ENCODE measurements at regions of chr3 and their contacts with region 1.

Region 1: DNA sequence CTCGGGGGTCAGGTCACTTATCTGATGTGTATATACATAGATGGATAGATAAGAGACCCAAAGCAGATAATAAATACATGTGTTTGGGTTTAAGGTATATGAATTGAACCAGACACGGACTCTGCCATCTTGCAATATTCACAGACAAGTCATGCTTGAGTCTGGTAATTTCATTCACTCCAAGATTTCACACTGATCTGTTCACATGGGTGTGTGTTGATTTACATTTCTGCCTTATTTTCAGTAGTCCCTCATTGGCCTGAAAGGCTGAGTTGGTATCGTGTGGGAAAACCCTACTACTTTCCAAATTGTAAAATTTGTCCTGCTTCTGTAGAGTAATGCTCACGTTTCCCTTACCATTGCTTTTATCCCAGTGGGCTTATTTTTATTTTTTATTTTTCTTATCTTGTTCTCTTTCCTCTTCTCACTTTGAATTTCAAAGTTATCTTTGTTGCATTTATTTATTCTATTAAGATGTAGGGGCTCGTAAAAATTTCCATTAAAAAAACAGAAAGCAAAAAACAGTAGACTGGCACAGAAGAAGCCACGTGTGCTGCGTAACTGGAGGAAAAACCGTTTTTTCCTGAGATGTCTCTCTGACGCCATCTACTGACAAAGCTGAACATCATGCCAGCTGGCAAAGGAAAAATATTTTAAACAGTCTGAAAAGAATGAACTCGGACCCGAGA is 10.8 kb upstream of the MFSD1 start:
- DNase-seq: peak in 1 of 3 donors; percentile 32
- ATAC-seq: peak; percentile 77
- H3K4me3 ChIP-seq: no peak overlapping the region
- H3K4me1 ChIP-seq: peaks cover 6% of the 10 kb centered on the region
- CTCF ChIP-seq: peak; percentile 75

Region 2: GRCh38 chr3:158539414-158540014 is 251.5 kb before region 1 on chr3:
- intact Hi-C with region 1: loop called in 1 of 2 experiments (anchors 10 kb)
- DNase-seq: peak in 1 of 3 donors; percentile 83
- ATAC-seq: peak; percentile 53
- H3K4me3 ChIP-seq: no peak overlapping the region
- H3K4me1 ChIP-seq: no peaks in the 10 kb centered on the region
- CTCF ChIP-seq: no peak

Region 3: DNA sequence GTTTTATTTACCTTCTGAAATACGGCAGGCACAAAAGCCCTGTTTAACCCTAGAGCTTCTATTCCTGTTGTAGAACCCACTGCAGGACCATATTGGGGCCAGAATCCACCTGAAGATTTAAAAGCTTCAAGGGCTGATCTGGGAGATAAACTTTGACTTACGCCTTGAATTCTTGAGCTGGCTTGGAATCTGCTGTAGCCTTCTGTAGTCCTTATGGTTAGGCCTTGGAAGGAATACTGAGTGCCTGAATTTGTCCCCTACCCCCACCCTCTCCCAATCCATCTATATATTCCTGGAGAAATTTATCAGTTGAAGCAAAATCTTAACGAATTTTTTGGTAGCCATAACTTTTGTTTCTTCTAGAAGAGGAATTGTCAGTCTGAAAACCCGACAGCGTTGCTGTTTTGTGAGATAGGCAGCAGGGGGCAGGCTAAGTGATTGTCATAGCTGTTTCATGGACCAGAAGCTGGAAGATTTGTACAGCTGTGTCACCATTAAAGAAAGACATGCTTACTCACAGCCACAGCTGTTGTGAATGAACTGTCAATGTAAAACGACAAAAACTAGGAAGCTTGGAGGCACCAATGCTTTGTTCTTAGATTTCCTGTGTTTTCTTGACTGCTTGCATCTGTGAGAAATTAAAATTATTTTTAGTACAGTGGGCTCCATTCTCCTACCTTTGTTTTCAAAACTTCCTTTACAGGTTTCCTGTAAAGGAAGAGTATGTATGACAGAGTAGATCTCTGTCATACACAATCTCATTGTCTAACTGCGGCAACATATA is 131.4 kb before region 1 on chr3:
- intact Hi-C with region 1: loop called (anchors 5 to 10 kb)
- DNase-seq: peak in 2 of 3 donors; percentile 53 to 79
- ATAC-seq: peak; percentile 94
- H3K4me3 ChIP-seq: no peak overlapping the region
- H3K4me1 ChIP-seq: no peaks in the 10 kb centered on the region
- CTCF ChIP-seq: peak; percentile 51

Region 4: DNA sequence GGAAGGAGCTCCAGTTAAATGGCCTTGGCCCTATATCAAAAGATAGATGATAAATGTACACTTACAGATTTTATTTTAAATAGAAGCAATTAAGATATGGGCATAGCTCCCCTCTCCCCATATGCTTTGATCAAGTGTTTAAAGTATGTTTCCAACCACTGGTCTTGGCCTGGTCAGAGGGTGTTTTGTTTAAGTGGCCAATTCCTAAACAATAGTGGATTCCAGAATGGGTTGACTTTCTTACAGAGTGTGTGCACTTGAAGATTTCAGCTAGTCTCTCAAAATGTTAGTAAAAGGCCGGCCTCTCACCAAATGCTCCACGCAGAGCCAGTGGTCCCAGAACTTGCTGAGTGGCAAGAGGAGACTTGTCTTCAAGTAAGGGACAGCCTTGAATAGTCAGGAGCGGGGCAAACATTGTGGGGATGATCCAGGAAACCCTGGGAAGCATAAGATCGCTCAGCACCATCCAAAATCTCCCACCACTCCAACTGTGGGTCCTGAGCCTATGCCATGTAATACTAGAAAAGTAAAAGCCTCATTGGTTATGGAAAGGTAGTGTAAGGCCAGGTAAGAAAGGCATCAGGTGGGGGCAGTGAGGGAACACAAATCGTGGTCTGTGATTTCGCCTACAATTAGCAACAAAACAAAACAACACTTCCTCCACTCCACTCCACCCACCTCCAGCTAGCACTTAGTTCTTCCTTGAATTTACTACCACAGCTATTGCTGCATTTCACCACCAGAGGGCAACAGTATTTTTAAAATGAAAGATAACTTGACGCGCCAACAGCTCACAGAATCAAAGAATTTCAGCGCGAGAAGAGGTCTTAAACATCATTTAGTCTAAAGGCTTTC is 63.6 kb before region 1 on chr3:
- intact Hi-C with region 1: loop called (anchors 5 kb)
- DNase-seq: peak in 1 of 3 donors; percentile 84
- ATAC-seq: peak; percentile 30
- H3K4me3 ChIP-seq: no peak overlapping the region
- H3K4me1 ChIP-seq: peaks cover 61% of the 10 kb centered on the region
- CTCF ChIP-seq: peak; percentile 66

Region 5: GRCh38 chr3:158742871-158743663 is 48.0 kb before region 1 on chr3:
- intact Hi-C with region 1: no loop called
- DNase-seq: no peak
- ATAC-seq: no peak
- H3K4me3 ChIP-seq: no peak overlapping the region
- H3K4me1 ChIP-seq: no peaks in the 10 kb centered on the region
- CTCF ChIP-seq: no peak

Measured in mucosa of descending colon (tissue), 3 donors.